AG04449 (cell line): ENCODE measurements at regions of chr14 and their contacts with region 1.

Region 1: GRCh38 chr14:91996948-91997371 is 42.9 kb downstream of the TRIP11 start:
- DNase-seq: peak; percentile 51
- H3K4me3 ChIP-seq: no peak overlapping the region
- CTCF ChIP-seq: peak; percentile 48

Region 2: GRCh38 chr14:91649930-91650329 is 347.0 kb before region 1 on chr14:
- CTCF ChIA-PET with region 1: interaction called, 17 read pairs
- POLR2A ChIA-PET with region 1: no interaction called
- DNase-seq: no peak
- H3K4me3 ChIP-seq: no peak overlapping the region
- CTCF ChIP-seq: peak; percentile 9

Region 3: GRCh38 chr14:91947471-91948184 is 49.3 kb before region 1 on chr14 and contains the start of gene FBLN5:
- CTCF ChIA-PET with region 1: interaction called, 21 read pairs
- POLR2A ChIA-PET with region 1: interaction called, 10 read pairs
- DNase-seq: peak; percentile 58
- H3K4me3 ChIP-seq: peak within 1 kb of the TSS; percentile 73
- CTCF ChIP-seq: no peak

Region 4: GRCh38 chr14:91977884-91978283 is 19.1 kb before region 1 on chr14:
- CTCF ChIA-PET with region 1: interaction called, 18 read pairs
- POLR2A ChIA-PET with region 1: no interaction called
- DNase-seq: no peak
- H3K4me3 ChIP-seq: no peak overlapping the region
- CTCF ChIP-seq: no peak

Region 5: GRCh38 chr14:91985521-91986255 is 11.3 kb before region 1 on chr14:
- CTCF ChIA-PET with region 1: interaction called, 32 read pairs
- POLR2A ChIA-PET with region 1: no interaction called
- DNase-seq: no peak
- H3K4me3 ChIP-seq: no peak overlapping the region
- CTCF ChIP-seq: no peak

Region 6: GRCh38 chr14:92012121-92012748 is 15.3 kb after region 1 on chr14:
- CTCF ChIA-PET with region 1: interaction called, 14 read pairs
- POLR2A ChIA-PET with region 1: no interaction called
- DNase-seq: no peak
- H3K4me3 ChIP-seq: no peak overlapping the region
- CTCF ChIP-seq: no peak